ENCODE measurements at regions of chr7 and their contacts with region 1.

Region 1: GRCh38 chr7:91233212-91233611 is 31.0 kb upstream of the FZD1 start:
- DNase-seq: no peak
- H3K4me3 ChIP-seq: no peak overlapping the region
- H3K27ac ChIP-seq: no peak overlapping the region
- H3K4me1 ChIP-seq: peaks cover 7% of the 10 kb centered on the region
- H3K27me3 ChIP-seq: no peaks in the 10 kb centered on the region
- CTCF ChIP-seq: no peak

Region 2: GRCh38 chr7:91336106-91336505 is 102.9 kb after region 1 on chr7:
- CTCF ChIA-PET with region 1: no interaction called
- dilution Hi-C with region 1: loop called (anchors 5 kb)
- in situ Hi-C with region 1: no loop called
- intact Hi-C with region 1: no loop called
- DNase-seq: no peak
- H3K4me3 ChIP-seq: no peak overlapping the region
- H3K27ac ChIP-seq: no peak overlapping the region
- H3K4me1 ChIP-seq: no peaks in the 10 kb centered on the region
- H3K27me3 ChIP-seq: peaks cover 12% of the 10 kb centered on the region
- CTCF ChIP-seq: no peak

Region 3: GRCh38 chr7:91582799-91583477 is 349.7 kb after region 1 on chr7:
- CTCF ChIA-PET with region 1: no interaction called
- dilution Hi-C with region 1: no loop called
- in situ Hi-C with region 1: no loop called
- intact Hi-C with region 1: no loop called
- DNase-seq: no peak
- H3K4me3 ChIP-seq: no peak overlapping the region
- H3K27ac ChIP-seq: no peak overlapping the region
- H3K4me1 ChIP-seq: no peaks in the 10 kb centered on the region
- H3K27me3 ChIP-seq: no peaks in the 10 kb centered on the region
- CTCF ChIP-seq: no peak